Psoas muscle (tissue), 8 donors: ENCODE measurements at regions of chrX and their contacts with region 1.

Region 1: GRCh38 chrX:13506574-13506973 is 62.8 kb upstream of the EGFL6 start:
- DNase-seq: peak; percentile 33 to 58
- ATAC-seq: no peak
- H3K4me3 ChIP-seq: no peak overlapping the region
- H3K27ac ChIP-seq: no peak overlapping the region
- H3K4me1 ChIP-seq: no peaks in the 10 kb centered on the region
- H3K27me3 ChIP-seq: peaks cover 0 to 9% (median 0%) of the 10 kb centered on the region in 3 donors
- CTCF ChIP-seq: peak; percentile 76

Region 2: DNA sequence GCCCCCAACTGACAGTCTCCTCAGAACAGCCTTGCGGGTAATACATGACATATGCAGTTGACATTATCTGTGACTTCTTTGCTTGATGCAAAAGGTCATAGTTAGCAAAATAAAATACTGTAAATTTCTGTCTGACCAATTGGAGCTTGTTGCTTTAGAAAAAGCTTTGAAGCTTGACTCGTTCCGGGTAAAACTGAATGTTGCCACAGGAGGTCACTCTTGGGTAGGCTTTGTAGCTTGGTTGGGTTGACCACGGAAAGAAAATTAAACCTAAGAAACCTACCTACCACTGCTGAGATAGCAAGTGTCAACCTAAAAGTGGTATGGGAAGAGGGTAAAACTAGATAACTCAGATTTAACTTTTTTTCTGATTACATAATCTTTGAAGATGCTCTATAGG is 692.2 kb before region 1 on chrX:
- intact Hi-C with region 1: loop called in 1 of 2 experiments (anchors 10 kb)
- DNase-seq: no peak
- ATAC-seq: no peak
- H3K4me3 ChIP-seq: no peak overlapping the region
- H3K27ac ChIP-seq: no peak overlapping the region
- H3K4me1 ChIP-seq: no peaks in the 10 kb centered on the region
- H3K27me3 ChIP-seq: peaks cover 0 to 3% (median 0%) of the 10 kb centered on the region in 3 donors
- CTCF ChIP-seq: peak; percentile 31

Region 3: GRCh38 chrX:13646154-13646549 is 139.6 kb after region 1 on chrX:
- intact Hi-C with region 1: loop called (anchors 2 to 10 kb)
- DNase-seq: peak in 1 of 2 donors; percentile 44
- ATAC-seq: peak in 2 of 4 donors; percentile 53 to 54
- H3K4me3 ChIP-seq: no peak overlapping the region
- H3K27ac ChIP-seq: no peak overlapping the region
- H3K4me1 ChIP-seq: no peaks in the 10 kb centered on the region
- H3K27me3 ChIP-seq: peaks cover 0 to 43% (median 0%) of the 10 kb centered on the region in 3 donors
- CTCF ChIP-seq: peak; percentile 54

Region 4: DNA sequence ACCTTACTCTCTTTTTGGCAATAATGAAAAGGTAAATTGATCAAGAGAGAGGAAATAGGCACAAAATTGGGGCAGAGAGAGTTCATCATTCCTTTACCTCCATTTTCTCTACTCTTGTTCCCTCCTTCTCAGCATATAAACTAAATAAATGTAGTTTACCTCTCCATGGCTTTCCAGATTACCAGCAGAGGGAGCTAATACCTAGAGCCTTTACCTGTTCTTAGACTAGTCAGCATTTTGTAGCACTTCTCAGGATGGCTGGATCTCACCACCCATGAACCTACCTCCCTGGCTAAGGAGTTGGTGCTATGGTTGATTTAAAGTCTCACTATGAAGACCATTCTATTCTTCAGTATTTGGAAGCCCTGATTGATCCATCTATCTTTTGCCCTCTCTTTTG is 243.6 kb after region 1 on chrX:
- intact Hi-C with region 1: loop called in 1 of 2 experiments (anchors 10 kb)
- DNase-seq: no peak
- ATAC-seq: peak in 3 of 4 donors; percentile 36 to 58 (median 52)
- H3K4me3 ChIP-seq: no peak overlapping the region
- H3K27ac ChIP-seq: no peak overlapping the region
- H3K4me1 ChIP-seq: no peaks in the 10 kb centered on the region
- H3K27me3 ChIP-seq: no peaks in the 10 kb centered on the region
- CTCF ChIP-seq: peak; percentile 54

Region 5: DNA sequence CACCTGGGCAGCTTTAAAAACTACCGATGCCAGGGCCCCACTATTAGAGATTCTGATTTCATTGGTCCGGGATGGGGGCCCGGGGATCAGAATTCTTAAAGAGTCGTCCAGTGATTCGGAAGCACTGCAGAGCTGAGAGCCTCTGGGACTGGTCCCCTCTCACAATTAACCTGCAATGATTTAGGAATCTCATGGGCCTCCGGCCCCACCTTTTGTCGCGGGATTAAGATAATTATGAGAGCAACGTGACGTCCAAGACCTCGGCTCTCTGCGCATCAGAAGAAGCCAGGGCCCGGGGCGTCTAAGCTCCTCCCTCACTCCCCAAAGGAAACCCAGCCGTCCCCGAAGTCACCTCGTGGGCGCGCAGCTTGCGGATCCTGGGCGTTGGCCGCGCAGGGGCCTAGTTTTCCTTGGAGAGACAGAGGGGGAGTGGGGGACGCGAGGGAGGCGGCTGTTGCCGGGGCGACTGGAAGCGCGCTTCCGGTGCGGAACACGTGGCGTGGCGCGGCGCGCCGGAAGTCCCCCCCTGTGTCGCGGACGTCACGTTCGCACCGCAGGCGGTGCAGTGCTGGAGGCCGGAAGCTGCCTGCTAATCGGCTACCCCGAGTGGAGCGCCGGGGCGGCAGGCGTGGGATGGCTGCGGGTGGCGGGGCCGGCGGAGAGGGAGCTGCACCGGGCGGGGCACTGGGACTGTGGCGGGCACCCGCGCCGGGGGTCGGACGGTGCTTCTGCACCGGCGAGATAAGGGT is 523.0 kb after region 1 on chrX and contains the start of gene GEMIN8:
- intact Hi-C with region 1: loop called (anchors 2 to 5 kb)
- DNase-seq: peak; percentile 89 to 95
- ATAC-seq: peak; percentile 98
- H3K4me3 ChIP-seq: peak within 1 kb of the TSS; percentile 72
- H3K27ac ChIP-seq: peak within 1 kb of the TSS; percentile 91
- H3K4me1 ChIP-seq: peaks cover 13% of the 10 kb centered on the region
- H3K27me3 ChIP-seq: no peaks in the 10 kb centered on the region
- CTCF ChIP-seq: no peak
- total RNA-seq, gene GEMIN8: 7.8 to 8.5 (median 8.3) TPM